Activated CD8-positive, alpha-beta T cell treated with anti-CD3 and anti-CD28 coated beads, Interleukin-2, amount 10 ng/mL, durations not matched to agents 7 days and 5 days (primary cell): ENCODE measurements at regions of chr15 and their contacts with region 1.

Region 1: GRCh38 chr15:90233376-90234095 is at the start of gene CIB1:
- DNase-seq: peak; percentile 97
- ATAC-seq: peak; percentile 85
- H3K4me3 Mint-ChIP-seq: peak within 1 kb of the TSS; percentile 92
- H3K27ac Mint-ChIP-seq: peak within 1 kb of the TSS; percentile 93
- H3K4me1 Mint-ChIP-seq: peaks cover 56% of the 10 kb centered on the region
- H3K27me3 Mint-ChIP-seq: no peaks in the 10 kb centered on the region
- total RNA-seq, gene CIB1: 92.4 to 102 TPM

Region 2: DNA sequence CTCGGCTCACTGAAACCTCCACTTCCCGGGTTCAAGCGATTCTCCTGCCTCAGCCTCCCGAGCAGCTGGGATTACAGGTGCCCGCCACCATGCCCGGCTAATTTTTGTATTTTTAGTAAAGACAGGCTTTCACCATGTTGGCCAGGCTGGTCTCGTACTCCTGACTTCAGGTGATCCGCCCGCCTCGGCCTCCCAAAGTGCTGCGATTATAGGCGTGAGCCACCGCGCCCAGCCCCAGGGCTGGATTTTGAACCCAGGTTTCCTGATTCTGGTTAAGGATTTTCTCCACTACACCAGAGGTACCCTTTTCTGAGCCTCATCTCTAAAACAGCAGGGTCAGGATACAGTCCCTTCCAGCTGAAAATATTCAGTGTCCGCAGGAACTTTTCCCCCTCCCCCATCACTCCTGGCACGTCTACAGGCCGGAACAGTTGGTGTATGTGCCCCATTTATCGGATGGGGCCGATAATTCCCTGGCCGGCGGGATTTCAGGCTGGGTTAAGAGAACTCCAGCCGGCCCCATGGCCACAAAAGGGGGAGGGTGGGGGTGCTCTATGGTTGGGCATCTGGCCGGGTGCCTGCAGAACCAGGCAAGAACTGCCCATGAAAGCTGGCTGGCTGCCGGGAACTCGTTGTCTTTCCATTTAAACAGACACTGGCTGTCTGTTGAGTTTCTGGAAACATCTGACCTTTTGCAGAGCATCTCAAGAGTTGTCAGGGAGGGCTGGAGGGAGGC is 59.2 kb before region 1 on chr15:
- CTCF ChIA-PET with region 1: no interaction called
- POLR2A ChIA-PET with region 1: no interaction called
- DNase-seq: no peak
- ATAC-seq: no peak
- H3K4me3 Mint-ChIP-seq: no peak overlapping the region
- H3K27ac Mint-ChIP-seq: no peak overlapping the region
- H3K4me1 Mint-ChIP-seq: peaks cover 11% of the 10 kb centered on the region
- H3K27me3 Mint-ChIP-seq: peaks cover 6% of the 10 kb centered on the region

Region 3: GRCh38 chr15:90201130-90201949 is 32.2 kb before region 1 on chr15 and contains the start of gene SEMA4B:
- CTCF ChIA-PET with region 1: interaction called, 16 read pairs
- POLR2A ChIA-PET with region 1: interaction called, 8 read pairs
- DNase-seq: peak; percentile 78
- ATAC-seq: peak; percentile 93
- H3K4me3 Mint-ChIP-seq: peak within 1 kb of the TSS; percentile 80
- H3K27ac Mint-ChIP-seq: peak within 1 kb of the TSS; percentile 80
- H3K4me1 Mint-ChIP-seq: peaks cover 26% of the 10 kb centered on the region
- H3K27me3 Mint-ChIP-seq: peaks cover 4% of the 10 kb centered on the region
- total RNA-seq, gene SEMA4B: 8.6 to 11.2 TPM

Region 4: GRCh38 chr15:90221246-90221900 is 12.2 kb before region 1 on chr15:
- CTCF ChIA-PET with region 1: interaction called, 17 read pairs
- POLR2A ChIA-PET with region 1: interaction called, 9 read pairs
- DNase-seq: peak; percentile 52
- ATAC-seq: peak; percentile 43
- H3K4me3 Mint-ChIP-seq: no peak overlapping the region
- H3K27ac Mint-ChIP-seq: no peak overlapping the region
- H3K4me1 Mint-ChIP-seq: peaks cover 20% of the 10 kb centered on the region
- H3K27me3 Mint-ChIP-seq: no peaks in the 10 kb centered on the region

Region 5: GRCh38 chr15:90265271-90266060 is 31.9 kb after region 1 on chr15 and contains the start of gene NGRN:
- CTCF ChIA-PET with region 1: interaction called, 3 read pairs
- POLR2A ChIA-PET with region 1: interaction called, 35 read pairs
- DNase-seq: peak; percentile 96
- ATAC-seq: peak; percentile 90
- H3K4me3 Mint-ChIP-seq: peak within 1 kb of the TSS; percentile 96
- H3K27ac Mint-ChIP-seq: peak within 1 kb of the TSS; percentile 98
- H3K4me1 Mint-ChIP-seq: peaks cover 42% of the 10 kb centered on the region
- H3K27me3 Mint-ChIP-seq: no peaks in the 10 kb centered on the region
- total RNA-seq, gene NGRN: 29.7 to 29.8 TPM